Panc1 (cell line): ENCODE measurements at regions of chr9 and their contacts with region 1.

Region 1: GRCh38 chr9:34651876-34652601 is at the start of gene IL11RA:
- DNase-seq: peak; percentile 60
- ATAC-seq: peak; percentile 94
- H3K4me3 ChIP-seq: peak within 1 kb of the TSS; percentile 37 to 75
- H3K27ac ChIP-seq: peak within 1 kb of the TSS; percentile 95
- H3K4me1 ChIP-seq: peaks cover 35% of the 10 kb centered on the region
- H3K27me3 ChIP-seq: no peaks in the 10 kb centered on the region
- CTCF ChIP-seq: no peak
- total RNA-seq, gene IL11RA: 21.6 TPM

Region 2: GRCh38 chr9:34540828-34541227 is 111.2 kb before region 1 on chr9:
- CTCF ChIA-PET with region 1: no interaction called
- POLR2A ChIA-PET with region 1: interaction called, 21 read pairs
- in situ Hi-C with region 1: no loop called
- intact Hi-C with region 1: no loop called
- DNase-seq: no peak
- ATAC-seq: no peak
- H3K4me3 ChIP-seq: no peak overlapping the region
- H3K27ac ChIP-seq: no peak overlapping the region
- H3K4me1 ChIP-seq: no peaks in the 10 kb centered on the region
- H3K27me3 ChIP-seq: peaks cover 2% of the 10 kb centered on the region; the same call in 1 of the 2 replicates
- CTCF ChIP-seq: no peak